ENCODE measurements at regions of chr16 and their contacts with region 1.

Region 1: DNA sequence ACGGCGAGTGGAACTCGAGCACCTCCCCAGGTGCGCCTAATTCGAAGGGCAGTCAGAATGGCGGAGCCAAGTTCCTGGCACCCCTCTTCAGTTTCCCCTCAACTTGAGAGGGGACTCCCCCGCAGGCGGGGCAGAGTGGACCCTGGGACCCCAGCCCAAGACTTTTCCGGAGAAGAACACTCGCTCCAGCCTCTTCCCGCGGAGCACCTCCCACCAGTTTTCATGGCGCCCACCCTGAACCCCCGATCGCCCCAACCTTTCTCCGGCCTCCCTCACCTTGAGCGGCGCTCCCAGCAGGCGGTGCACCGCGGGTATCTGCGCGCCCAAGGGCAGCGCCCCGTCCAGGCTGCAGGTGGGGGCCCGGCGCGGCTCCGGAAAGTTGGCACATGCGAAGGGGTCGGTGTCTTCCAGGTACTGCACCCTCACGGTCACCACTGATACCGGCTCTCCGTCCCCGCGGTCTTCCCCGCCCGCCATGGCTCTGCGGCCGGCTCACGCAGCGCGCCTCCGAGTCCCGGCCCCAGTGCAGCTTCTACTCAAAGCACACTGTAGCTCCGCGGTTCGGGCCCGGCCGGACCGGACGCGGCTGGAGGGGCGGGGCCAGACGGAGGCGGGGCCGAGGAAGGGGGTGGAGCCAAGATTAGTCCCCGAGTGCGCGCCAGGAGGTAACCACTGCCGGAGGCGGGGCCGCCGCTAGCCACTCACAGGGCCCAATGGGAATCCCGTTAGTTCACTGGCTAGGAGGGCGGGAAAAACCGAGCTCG is at the start of gene FHOD1:
- DNase-seq: peak; percentile 94 to 98 (median 96)
- ATAC-seq: peak; percentile 84
- H3K4me3 ChIP-seq: peak within 1 kb of the TSS; percentile 88
- H3K27ac ChIP-seq: peak within 1 kb of the TSS; percentile 68
- H3K4me1 ChIP-seq: peaks cover 51 to 70% of the 10 kb centered on the region in 2 experiments
- H3K27me3 ChIP-seq: no peaks in the 10 kb centered on the region
- CTCF ChIP-seq: no peak
- EP300 ChIP-seq: no peak
- POLR2A ChIP-seq: peak; percentile 90
- RAD21 ChIP-seq: no peak
- polyA plus RNA-seq, gene FHOD1: 18.7 to 19.2 TPM

Region 2: DNA sequence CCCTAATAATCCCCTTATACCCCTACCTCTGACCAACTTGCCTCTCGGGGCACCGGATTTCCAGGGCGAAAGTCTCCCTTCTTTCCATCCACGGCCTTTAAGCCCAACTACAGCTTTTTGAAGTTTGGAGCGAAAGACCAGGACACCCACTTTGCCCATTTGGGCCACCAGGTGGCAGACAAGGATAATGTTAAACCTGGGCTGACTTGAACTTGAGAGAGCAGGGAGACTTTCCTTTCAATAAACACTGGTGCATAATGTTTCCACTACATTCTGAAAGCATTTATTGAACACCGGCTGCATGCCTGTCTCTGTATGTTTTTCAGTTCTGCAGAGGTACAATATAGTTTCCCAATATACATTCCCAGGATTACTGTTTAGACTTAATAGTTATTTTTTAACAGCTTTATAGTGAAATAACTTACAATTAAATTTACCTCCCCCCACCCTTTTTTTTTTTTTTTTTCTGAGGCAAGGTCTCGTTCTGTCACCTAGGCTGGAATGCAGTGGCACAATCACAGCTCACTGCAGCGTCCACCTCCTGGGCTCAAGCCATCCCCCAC is 292.9 kb before region 1 on chr16:
- CTCF ChIA-PET with region 1: no interaction called
- POLR2A ChIA-PET with region 1: no interaction called
- in situ Hi-C with region 1: no loop called
- intact Hi-C with region 1: loop called (anchors 5 kb)
- DNase-seq: peak; percentile 71 to 88 (median 78)
- ATAC-seq: peak; percentile 97
- H3K4me3 ChIP-seq: no peak overlapping the region
- H3K27ac ChIP-seq: no peak overlapping the region
- H3K4me1 ChIP-seq: peaks cover 0 to 7% of the 10 kb centered on the region in 2 experiments; a peak in 1 of 5 replicates
- H3K27me3 ChIP-seq: no peaks in the 10 kb centered on the region
- CTCF ChIP-seq: peak; percentile 84 to 89 (median 88)
- EP300 ChIP-seq: no peak
- POLR2A ChIP-seq: no peak
- RAD21 ChIP-seq: peak; percentile 77 to 90

Region 3: DNA sequence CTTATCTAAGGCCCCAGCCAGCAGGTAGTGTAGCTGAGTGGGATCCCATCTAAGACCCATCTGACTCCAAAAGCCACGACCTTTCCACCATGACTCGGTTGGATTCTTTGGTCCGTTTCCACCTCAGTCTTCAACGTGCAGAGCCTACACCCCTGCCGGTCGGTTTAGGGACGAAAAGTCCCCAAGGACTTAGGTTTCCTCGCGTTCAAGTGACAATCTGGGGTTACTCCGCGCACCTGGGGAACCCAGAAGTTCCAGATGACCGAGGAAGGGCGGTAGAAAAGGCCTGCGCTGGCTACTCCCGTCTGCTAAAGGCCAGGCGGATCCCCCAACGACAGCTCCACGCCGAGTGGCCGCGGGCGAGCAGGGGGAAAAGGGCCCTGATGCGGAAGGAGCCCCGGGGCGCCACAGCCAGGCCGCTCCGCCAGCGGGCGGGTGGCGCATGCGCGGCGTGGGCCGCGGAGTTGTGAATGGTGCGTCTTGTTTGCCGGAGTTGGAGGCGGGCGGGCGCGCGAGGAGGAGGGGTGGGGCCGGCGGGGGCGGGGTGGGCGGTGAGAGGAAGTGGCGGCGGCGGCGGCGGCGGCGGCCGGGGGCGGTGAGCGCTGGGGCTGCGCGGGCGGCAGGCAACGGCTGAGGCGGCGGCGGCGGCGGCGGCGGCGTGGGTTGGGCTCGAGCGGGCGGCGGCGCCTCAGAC is 218.4 kb before region 1 on chr16 and contains the start of gene CBFB:
- CTCF ChIA-PET with region 1: no interaction called
- POLR2A ChIA-PET with region 1: no interaction called
- in situ Hi-C with region 1: no loop called
- intact Hi-C with region 1: loop called (anchors 2 kb)
- DNase-seq: peak; percentile 96 to 99 (median 98)
- ATAC-seq: peak; percentile 92
- H3K4me3 ChIP-seq: peak within 1 kb of the TSS; percentile 85
- H3K27ac ChIP-seq: peak within 1 kb of the TSS; percentile 97
- H3K4me1 ChIP-seq: peaks cover 13 to 29% of the 10 kb centered on the region in 2 experiments
- H3K27me3 ChIP-seq: no peaks in the 10 kb centered on the region
- CTCF ChIP-seq: peak; percentile 8 to 44 (median 12); a peak in 3 of 6 replicates
- EP300 ChIP-seq: peak; percentile 18
- POLR2A ChIP-seq: peak; percentile 98
- RAD21 ChIP-seq: peak in 1 of 2 experiments; percentile 2; a peak in 2 of 4 replicates
- polyA plus RNA-seq, gene CBFB: 22.0 to 40.7 TPM

Region 4: DNA sequence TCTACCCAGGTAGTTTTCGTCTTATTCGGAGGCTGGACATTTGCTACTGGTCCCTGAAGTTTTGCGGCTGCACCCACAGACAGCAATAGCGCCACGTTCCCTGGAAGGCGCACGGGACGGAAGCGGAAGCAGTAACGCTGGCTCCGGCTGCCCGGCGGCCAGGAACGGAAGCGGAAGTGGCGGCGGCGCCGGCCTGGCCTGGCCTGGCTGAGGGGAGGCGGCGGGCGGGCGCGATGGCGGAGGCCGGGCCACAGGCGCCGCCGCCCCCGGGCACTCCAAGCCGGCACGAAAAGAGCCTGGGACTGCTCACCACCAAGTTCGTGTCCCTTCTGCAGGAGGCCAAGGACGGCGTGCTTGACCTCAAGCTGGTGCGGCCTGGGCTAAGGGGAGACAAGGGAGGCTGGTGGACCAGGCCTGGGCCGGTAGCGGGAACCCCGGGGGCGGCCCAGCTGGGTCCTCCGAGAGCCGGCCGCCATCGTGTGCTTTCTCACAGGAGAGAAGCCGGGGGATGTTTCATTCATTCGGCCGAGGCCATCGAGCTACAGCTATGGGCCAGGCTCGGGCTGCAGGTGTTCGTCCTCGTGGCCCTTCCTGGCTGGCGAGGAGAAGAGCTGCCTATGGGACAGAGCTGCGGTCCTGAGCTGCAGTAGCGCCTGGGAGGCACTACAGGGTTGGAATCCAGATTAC is 55.0 kb before region 1 on chr16 and contains the start of gene E2F4:
- CTCF ChIA-PET with region 1: no interaction called
- POLR2A ChIA-PET with region 1: no interaction called
- in situ Hi-C with region 1: no loop called
- intact Hi-C with region 1: loop called (anchors 2 kb)
- DNase-seq: peak; percentile 88 to 96 (median 90)
- ATAC-seq: peak; percentile 98
- H3K4me3 ChIP-seq: peak within 1 kb of the TSS; percentile 83
- H3K27ac ChIP-seq: peak within 1 kb of the TSS; percentile 63
- H3K4me1 ChIP-seq: peaks cover 38 to 69% of the 10 kb centered on the region in 2 experiments
- H3K27me3 ChIP-seq: no peaks in the 10 kb centered on the region
- CTCF ChIP-seq: no peak
- EP300 ChIP-seq: peak; percentile 41; the same call in 1 of the 2 replicates
- POLR2A ChIP-seq: peak; percentile 66; the same call in 1 of the 2 replicates
- RAD21 ChIP-seq: no peak
- polyA plus RNA-seq, gene E2F4: 9.7 to 18.9 TPM

Region 5: GRCh38 chr16:67236563-67237395 is 10.3 kb before region 1 on chr16:
- CTCF ChIA-PET with region 1: no interaction called
- POLR2A ChIA-PET with region 1: interaction called, 14 read pairs
- in situ Hi-C with region 1: no loop called
- intact Hi-C with region 1: no loop called
- DNase-seq: peak; percentile 90 to 100 (median 98)
- ATAC-seq: peak; percentile 97
- H3K4me3 ChIP-seq: no peak overlapping the region
- H3K27ac ChIP-seq: peak overlapping the region; percentile 43; the same call in 1 of the 3 replicates
- H3K4me1 ChIP-seq: peaks cover 28 to 41% of the 10 kb centered on the region in 2 experiments
- H3K27me3 ChIP-seq: no peaks in the 10 kb centered on the region
- CTCF ChIP-seq: no peak
- EP300 ChIP-seq: no peak
- POLR2A ChIP-seq: no peak
- RAD21 ChIP-seq: no peak